MCF 10A (cell line): ENCODE measurements at regions of chr11 and their contacts with region 1.

Region 1: DNA sequence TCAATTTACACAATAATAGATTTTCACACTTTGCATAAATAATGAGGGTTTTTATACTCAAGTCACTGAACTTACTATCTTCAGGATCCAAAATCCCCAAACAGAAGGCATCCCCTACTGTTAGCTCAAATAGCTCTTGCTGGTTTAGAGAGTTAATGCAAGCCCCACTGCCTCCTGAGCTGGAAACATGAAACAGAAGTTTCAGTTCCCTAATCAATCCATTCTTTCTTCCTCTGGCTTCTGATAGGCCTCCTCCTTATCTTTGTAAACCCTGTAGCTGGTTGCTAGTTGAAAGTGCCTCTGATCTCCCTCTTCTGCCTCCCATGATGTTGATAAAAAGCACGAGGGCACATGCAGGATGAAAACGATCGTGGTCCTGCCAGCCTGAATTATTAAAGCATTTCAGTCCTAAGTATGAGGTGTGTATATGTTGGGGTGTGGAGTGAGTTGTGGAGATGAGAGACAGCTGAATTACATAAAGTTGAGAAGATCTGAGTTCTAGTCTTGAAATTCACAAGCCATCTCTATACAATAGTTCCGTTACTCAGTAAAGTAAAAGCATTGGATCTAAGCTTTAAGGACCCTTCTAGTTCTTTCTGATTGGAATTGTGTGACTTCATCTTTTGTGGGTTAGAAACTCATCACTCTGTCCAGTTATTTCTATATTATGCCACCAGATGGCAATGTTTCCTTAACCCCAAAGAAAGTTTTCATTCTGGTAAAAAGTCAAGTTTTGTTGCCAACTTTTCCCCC is 35.0 kb upstream of the EHF start:
- DNase-seq: peak; percentile 69
- H3K4me3 Mint-ChIP-seq: no peak overlapping the region
- H3K27ac Mint-ChIP-seq: peak overlapping the region; percentile 83
- H3K4me1 Mint-ChIP-seq: peaks cover 23% of the 10 kb centered on the region
- H3K27me3 Mint-ChIP-seq: no peaks in the 10 kb centered on the region
- CTCF ChIP-seq: peak; percentile 66

Region 2: GRCh38 chr11:34512840-34513681 is 72.8 kb before region 1 on chr11:
- CTCF ChIA-PET with region 1: interaction called, 33 read pairs
- POLR2A ChIA-PET with region 1: no interaction called
- intact Hi-C with region 1: loop called (anchors 5 kb)
- DNase-seq: peak; percentile 66
- H3K4me3 Mint-ChIP-seq: no peak overlapping the region
- H3K27ac Mint-ChIP-seq: no peak overlapping the region
- H3K4me1 Mint-ChIP-seq: no peaks in the 10 kb centered on the region
- H3K27me3 Mint-ChIP-seq: peaks cover 5% of the 10 kb centered on the region
- CTCF ChIP-seq: peak; percentile 63

Region 3: GRCh38 chr11:34640050-34640923 is 54.4 kb after region 1 on chr11:
- CTCF ChIA-PET with region 1: interaction called, 44 read pairs
- POLR2A ChIA-PET with region 1: interaction called, 18 read pairs
- intact Hi-C with region 1: no loop called
- DNase-seq: peak; percentile 86
- H3K4me3 Mint-ChIP-seq: peak overlapping the region; percentile 45
- H3K27ac Mint-ChIP-seq: peak overlapping the region; percentile 87
- H3K4me1 Mint-ChIP-seq: peaks cover 51% of the 10 kb centered on the region
- H3K27me3 Mint-ChIP-seq: no peaks in the 10 kb centered on the region
- CTCF ChIP-seq: no peak

Region 4: DNA sequence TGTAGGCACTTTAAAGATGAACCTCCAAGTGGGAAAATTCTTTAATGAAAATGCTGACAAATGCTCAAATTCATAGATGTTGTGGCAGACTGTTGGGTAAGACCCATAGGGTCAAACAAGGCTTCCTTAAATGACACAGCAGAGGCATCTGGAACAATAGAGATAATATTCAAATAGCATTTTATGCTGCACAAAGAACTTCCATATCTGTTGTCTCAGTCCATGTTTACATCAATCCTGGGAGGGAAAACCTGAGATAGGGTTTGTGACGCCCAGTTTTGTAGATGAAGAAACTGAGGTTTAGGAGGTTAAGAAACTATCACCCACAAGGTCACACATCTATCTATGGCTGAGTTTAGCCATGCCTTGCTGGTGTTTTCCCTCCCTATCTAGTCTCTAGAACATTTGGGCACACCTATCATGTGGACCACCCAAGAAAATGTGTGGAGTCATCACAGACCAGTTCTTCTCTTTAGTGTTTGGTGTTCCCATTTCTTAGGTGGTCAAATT is 141.4 kb after region 1 on chr11:
- CTCF ChIA-PET with region 1: no interaction called
- POLR2A ChIA-PET with region 1: no interaction called
- intact Hi-C with region 1: no loop called
- DNase-seq: no peak
- H3K4me3 Mint-ChIP-seq: no peak overlapping the region
- H3K27ac Mint-ChIP-seq: no peak overlapping the region
- H3K4me1 Mint-ChIP-seq: peaks cover 13% of the 10 kb centered on the region
- H3K27me3 Mint-ChIP-seq: no peaks in the 10 kb centered on the region
- CTCF ChIP-seq: no peak

Region 5: DNA sequence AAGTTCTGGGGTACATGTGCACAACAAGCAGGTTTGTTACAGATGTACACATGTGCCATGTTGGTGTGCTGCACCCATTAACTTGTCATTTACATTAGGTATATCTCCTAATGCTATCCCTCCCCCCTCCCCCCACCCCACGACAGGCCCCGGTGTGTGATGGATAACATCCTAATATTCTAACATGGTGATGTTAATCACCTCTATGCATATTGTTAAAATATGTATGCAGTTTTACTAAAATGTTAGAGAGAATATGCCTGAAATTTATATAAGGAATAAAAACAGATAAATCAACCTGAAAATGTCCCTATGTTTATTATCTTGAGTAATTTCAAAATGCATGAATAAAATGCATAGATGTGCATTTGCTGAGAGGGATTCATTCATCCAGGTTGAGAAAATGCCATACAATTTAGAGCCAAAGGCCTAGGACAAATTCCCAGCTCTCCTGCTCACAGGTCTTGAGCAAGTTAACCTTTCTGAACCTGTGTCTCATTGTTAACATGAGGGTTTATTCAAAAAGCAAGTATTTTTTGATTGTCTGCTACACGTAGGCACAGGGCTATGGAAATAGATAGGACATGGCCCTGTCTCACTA is 291.6 kb after region 1 on chr11:
- CTCF ChIA-PET with region 1: interaction called, 11 read pairs
- POLR2A ChIA-PET with region 1: no interaction called
- intact Hi-C with region 1: no loop called
- DNase-seq: no peak
- H3K4me3 Mint-ChIP-seq: no peak overlapping the region
- H3K27ac Mint-ChIP-seq: no peak overlapping the region
- H3K4me1 Mint-ChIP-seq: no peaks in the 10 kb centered on the region
- H3K27me3 Mint-ChIP-seq: no peaks in the 10 kb centered on the region
- CTCF ChIP-seq: no peak

Region 6: DNA sequence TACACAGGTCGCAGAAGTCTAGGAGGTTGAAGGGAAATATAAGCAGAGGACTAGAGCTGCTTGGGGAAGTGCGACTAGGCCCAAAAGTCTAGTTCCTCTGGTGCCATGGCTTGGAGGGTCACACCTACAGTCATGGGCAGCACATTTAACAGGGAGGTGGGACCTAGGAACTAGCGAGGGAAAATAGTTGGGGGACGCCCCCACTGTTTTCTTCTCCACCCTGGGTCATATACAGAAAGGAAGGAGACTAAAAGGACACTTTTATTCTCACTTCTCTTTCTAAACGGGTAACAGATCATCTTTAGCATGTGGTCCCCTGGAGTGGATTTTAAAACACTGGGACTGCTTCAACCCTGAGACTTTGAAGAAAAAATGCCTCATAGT is 313.7 kb after region 1 on chr11:
- CTCF ChIA-PET with region 1: interaction called, 39 read pairs
- POLR2A ChIA-PET with region 1: no interaction called
- intact Hi-C with region 1: no loop called
- DNase-seq: peak; percentile 14
- H3K4me3 Mint-ChIP-seq: no peak overlapping the region
- H3K27ac Mint-ChIP-seq: no peak overlapping the region
- H3K4me1 Mint-ChIP-seq: peaks cover 4% of the 10 kb centered on the region
- H3K27me3 Mint-ChIP-seq: no peaks in the 10 kb centered on the region
- CTCF ChIP-seq: no peak